ENCODE measurements at regions of chr17 and their contacts with region 1.

Region 1: DNA sequence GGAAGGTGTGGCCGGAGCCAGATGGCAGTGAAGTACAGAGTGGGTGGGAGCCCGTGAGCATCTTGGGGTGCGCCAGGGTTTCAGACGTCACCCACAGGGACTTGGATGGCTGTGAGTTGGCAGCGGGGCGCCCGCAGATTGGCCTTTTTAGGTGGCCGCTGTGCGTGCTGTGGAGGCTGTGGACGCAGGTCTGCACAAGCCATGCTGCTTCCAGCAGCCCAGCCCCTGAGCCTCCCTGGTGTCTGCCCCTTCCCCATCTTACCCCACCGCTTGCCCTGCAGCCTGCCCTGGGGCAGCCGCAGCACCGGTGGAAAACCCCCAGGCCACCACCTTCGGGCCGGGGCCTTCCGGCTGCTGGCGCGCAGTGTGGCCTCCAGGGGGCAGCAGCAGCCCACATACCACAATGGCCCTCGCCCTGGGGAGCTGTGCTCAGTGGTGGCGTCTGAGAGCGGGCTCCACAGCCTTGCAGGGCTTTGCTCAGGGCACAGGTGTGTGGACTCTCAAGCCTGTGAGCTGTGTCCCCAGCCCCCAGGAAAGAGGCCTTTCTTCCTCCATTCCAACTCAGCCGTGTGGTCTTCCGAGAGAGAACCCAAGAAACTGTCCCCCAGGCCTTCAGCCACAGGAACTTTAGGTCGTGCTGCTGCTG is 11.8 kb downstream of the ENDOV start:
- DNase-seq: peak; percentile 88

Region 2: GRCh38 chr17:80575057-80575875 is 148.5 kb after region 1 on chr17:
- intact Hi-C with region 1: loop called (anchors 5 kb)
- DNase-seq: peak; percentile 91

Measured in cardiac septum (tissue), 1 donor.